Ovary (tissue), 10 donors: ENCODE measurements at regions of chr3 and their contacts with region 1.

Region 1: DNA sequence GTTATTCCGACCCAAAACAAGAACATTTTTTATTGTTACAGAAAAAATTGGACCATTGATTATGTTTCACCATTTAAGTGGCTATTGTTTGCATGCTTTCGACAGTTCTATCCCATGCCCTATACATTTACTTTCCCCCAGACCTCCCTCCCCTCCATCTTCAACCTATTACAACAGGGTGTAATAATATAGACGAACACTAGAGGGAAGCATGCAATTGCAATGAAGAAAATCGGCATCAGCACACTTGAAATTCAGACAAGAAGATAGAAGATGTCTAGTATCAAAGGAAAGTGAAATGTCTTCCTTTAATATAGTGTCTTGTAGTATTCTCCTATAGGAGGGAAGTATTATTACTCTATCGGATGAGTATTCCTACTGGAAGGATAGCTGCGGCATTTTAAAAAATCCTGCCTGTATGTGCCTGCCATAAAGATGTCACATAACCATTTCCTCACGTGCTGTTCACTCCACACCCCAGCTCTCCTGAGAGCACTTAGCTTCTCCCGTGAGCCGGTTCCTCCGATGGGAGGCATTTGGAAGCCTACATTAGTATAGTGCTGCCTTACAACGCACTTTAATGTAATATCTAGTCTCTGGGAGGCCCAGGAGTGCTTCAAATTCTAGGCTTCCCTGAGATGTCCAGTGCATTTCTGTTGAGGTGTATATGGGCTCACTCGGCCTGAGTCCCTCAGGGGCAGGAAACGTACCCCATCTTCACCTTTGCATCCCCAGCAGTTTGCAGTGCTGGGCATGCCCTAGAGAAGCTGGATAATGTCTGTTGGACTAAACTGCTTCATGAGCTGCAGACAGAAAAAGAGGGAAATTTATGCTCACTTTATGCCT is 17.8 kb upstream of the ERICH6 start:
- DNase-seq: no peak
- H3K4me3 ChIP-seq: peak overlapping the region; percentile 0
- H3K27ac ChIP-seq: no peak overlapping the region
- H3K4me1 ChIP-seq: no peaks in the 10 kb centered on the region
- H3K27me3 ChIP-seq: no peaks in the 10 kb centered on the region
- CTCF ChIP-seq: peak; percentile 60 to 93 (median 90)
- EP300 ChIP-seq: no peak
- POLR2A ChIP-seq: no peak

Region 2: GRCh38 chr3:150775091-150775501 is 53.6 kb after region 1 on chr3:
- intact Hi-C with region 1: loop called in 2 of 4 experiments (anchors 10 kb)
- DNase-seq: no peak
- H3K4me3 ChIP-seq: no peak overlapping the region
- H3K27ac ChIP-seq: no peak overlapping the region
- H3K4me1 ChIP-seq: peaks cover 6% of the 10 kb centered on the region
- H3K27me3 ChIP-seq: no peaks in the 10 kb centered on the region
- CTCF ChIP-seq: no peak
- EP300 ChIP-seq: no peak
- POLR2A ChIP-seq: no peak

Region 3: GRCh38 chr3:150787741-150788370 is 66.3 kb after region 1 on chr3:
- intact Hi-C with region 1: loop called in 1 of 4 experiments (anchors 5 kb)
- DNase-seq: peak; percentile 73 to 93 (median 84)
- H3K4me3 ChIP-seq: no peak overlapping the region
- H3K27ac ChIP-seq: no peak overlapping the region
- H3K4me1 ChIP-seq: no peaks in the 10 kb centered on the region
- H3K27me3 ChIP-seq: no peaks in the 10 kb centered on the region
- CTCF ChIP-seq: peak; percentile 33 to 72 (median 41)
- EP300 ChIP-seq: no peak
- POLR2A ChIP-seq: no peak

Region 4: GRCh38 chr3:150861851-150862250 is 140.3 kb after region 1 on chr3:
- intact Hi-C with region 1: loop called in 3 of 4 experiments (anchors 2 to 5 kb)
- DNase-seq: no peak
- H3K4me3 ChIP-seq: no peak overlapping the region
- H3K27ac ChIP-seq: no peak overlapping the region
- H3K4me1 ChIP-seq: no peaks in the 10 kb centered on the region
- H3K27me3 ChIP-seq: no peaks in the 10 kb centered on the region
- CTCF ChIP-seq: no peak
- EP300 ChIP-seq: no peak
- POLR2A ChIP-seq: no peak

Region 5: GRCh38 chr3:150870396-150870795 is 148.9 kb after region 1 on chr3:
- intact Hi-C with region 1: loop called in 1 of 4 experiments (anchors 2 kb)
- DNase-seq: no peak
- H3K4me3 ChIP-seq: no peak overlapping the region
- H3K27ac ChIP-seq: no peak overlapping the region
- H3K4me1 ChIP-seq: no peaks in the 10 kb centered on the region
- H3K27me3 ChIP-seq: no peaks in the 10 kb centered on the region
- CTCF ChIP-seq: no peak
- EP300 ChIP-seq: no peak
- POLR2A ChIP-seq: no peak

Region 6: GRCh38 chr3:151146071-151146730 is 424.7 kb after region 1 on chr3:
- intact Hi-C with region 1: loop called (anchors 5 to 10 kb)
- DNase-seq: peak; percentile 38 to 67 (median 62)
- H3K4me3 ChIP-seq: no peak overlapping the region
- H3K27ac ChIP-seq: no peak overlapping the region
- H3K4me1 ChIP-seq: no peaks in the 10 kb centered on the region
- H3K27me3 ChIP-seq: no peaks in the 10 kb centered on the region
- CTCF ChIP-seq: peak; percentile 54 to 74 (median 65)
- EP300 ChIP-seq: no peak
- POLR2A ChIP-seq: no peak